ENCODE measurements at regions of chr2 and their contacts with region 1.

Region 1: DNA sequence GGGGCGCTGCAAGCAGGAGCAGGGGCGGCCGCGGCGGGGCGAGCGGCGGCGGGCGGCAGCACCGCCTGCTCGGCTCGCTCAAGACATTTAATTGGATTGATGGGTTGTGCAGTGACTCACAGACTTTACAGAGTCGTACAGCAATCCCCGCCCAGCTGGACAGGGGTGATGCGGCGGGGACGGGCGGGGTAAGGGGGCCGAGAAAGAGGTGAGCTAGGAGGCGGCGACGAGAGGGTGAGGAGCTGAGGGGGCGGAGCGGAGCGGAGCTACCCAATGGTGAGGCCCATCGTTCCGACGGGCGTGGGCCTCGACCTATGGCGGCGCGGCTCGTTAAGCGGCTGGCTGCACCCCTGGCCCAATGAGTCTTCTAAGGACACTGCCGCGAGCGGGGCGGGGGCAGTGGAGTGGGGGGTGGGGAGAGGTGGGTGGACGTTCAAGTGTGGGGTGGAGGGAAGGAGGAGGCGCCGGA is 97.1 kb upstream of the SERTAD2 start:
- DNase-seq: peak; percentile 94 to 100 (median 99)
- H3K4me3 ChIP-seq: peak overlapping the region; percentile 59 to 97 (median 86)
- H3K27ac ChIP-seq: peak overlapping the region; percentile 89 to 100 (median 99)
- H3K27me3 ChIP-seq: no peaks in the 10 kb centered on the region
- CTCF ChIP-seq: peak in 27 of 56 donors; percentile 1 to 54 (median 33)

Region 2: GRCh38 chr2:64653349-64654062 is 97.3 kb before region 1 on chr2 and contains the start of gene SERTAD2:
- intact Hi-C with region 1: loop called (anchors 1 to 2 kb)
- DNase-seq: peak; percentile 72 to 90 (median 83)
- H3K4me3 ChIP-seq: peak within 1 kb of the TSS; percentile 74 to 99 (median 93)
- H3K27ac ChIP-seq: peak within 1 kb of the TSS; percentile 83 to 99 (median 96)
- H3K27me3 ChIP-seq: no peaks in the 10 kb centered on the region
- CTCF ChIP-seq: peak in 25 of 56 donors; percentile 3 to 41 (median 16)
- total RNA-seq, gene SERTAD2: 7.8 to 24.8 (median 13.4) TPM

Region 3: GRCh38 chr2:64730551-64731262 is 20.1 kb before region 1 on chr2:
- intact Hi-C with region 1: loop called in 1 of 2 experiments (anchors 2 kb)
- DNase-seq: peak in 8 of 10 donors; percentile 47 to 79 (median 64)
- H3K4me3 ChIP-seq: peak overlapping the region; percentile 22 to 70 (median 50)
- H3K27ac ChIP-seq: peak overlapping the region; percentile 21 to 91 (median 82)
- H3K27me3 ChIP-seq: no peaks in the 10 kb centered on the region
- CTCF ChIP-seq: peak in 5 of 56 donors; percentile 6 to 33 (median 12)

Region 4: GRCh38 chr2:64807417-64807816 is 56.6 kb after region 1 on chr2:
- intact Hi-C with region 1: no loop called
- DNase-seq: peak in 1 of 10 donors; percentile 36
- H3K4me3 ChIP-seq: no peak overlapping the region
- H3K27ac ChIP-seq: no peak overlapping the region
- H3K27me3 ChIP-seq: no peaks in the 10 kb centered on the region
- CTCF ChIP-seq: no peak

Region 5: DNA sequence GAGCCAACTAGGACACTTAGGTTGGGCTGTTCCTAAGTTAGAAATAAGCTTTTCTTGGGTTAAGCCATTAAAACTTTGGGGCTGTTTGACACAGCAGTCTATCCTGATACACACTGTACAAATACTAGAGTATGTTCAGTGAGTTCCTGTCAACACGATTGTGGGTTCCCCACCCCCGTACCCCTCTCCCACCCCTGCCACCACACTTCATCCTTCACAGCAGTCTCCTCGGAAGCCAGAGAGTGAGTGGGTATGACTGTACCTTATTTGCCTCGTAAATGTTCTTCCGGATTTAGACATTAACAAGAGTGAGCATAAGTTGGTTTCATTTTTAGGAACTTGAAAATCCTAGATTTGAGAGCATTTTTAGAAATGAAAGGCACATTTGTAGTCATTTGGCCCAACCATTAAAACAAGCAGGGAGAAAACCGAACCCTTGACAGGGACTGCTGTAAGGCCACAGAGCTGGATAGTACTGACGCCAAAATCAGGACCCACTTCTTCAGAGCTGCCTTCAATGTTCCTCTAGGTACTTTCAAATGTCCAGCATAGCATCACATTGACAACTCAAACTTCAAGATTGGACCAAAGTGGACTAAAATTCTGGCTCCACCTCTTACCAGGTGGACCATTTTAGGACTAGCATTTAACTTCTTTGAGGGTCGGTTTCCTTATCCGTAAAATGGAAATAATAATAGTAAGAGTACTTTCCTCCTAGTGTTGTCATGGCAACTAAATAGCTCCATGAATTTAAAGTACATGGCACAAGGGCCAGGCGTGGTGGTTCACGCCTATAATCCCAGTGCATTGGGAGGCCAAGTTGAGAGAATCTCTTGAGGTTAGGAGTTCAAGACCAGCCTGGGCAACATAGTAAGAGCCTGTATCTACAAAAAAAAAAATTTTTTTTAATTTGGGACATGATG is 69.2 kb after region 1 on chr2:
- intact Hi-C with region 1: no loop called
- DNase-seq: peak in 1 of 10 donors; percentile 17
- H3K4me3 ChIP-seq: no peak overlapping the region
- H3K27ac ChIP-seq: peak overlapping the region in 16 of 59 donors; percentile 10 to 61 (median 27)
- H3K27me3 ChIP-seq: no peaks in the 10 kb centered on the region
- CTCF ChIP-seq: no peak

Region 6: GRCh38 chr2:64831134-64831976 is 80.5 kb after region 1 on chr2:
- intact Hi-C with region 1: loop called (anchors 1 to 2 kb)
- DNase-seq: peak; percentile 18 to 85 (median 68)
- H3K4me3 ChIP-seq: peak overlapping the region in 43 of 59 donors; percentile 1 to 64 (median 31)
- H3K27ac ChIP-seq: peak overlapping the region in 58 of 59 donors; percentile 10 to 94 (median 82)
- H3K27me3 ChIP-seq: no peaks in the 10 kb centered on the region
- CTCF ChIP-seq: peak; percentile 30 to 92 (median 82)

Region 7: GRCh38 chr2:64998658-64999061 is 247.8 kb after region 1 on chr2:
- intact Hi-C with region 1: no loop called
- DNase-seq: peak in 3 of 10 donors; percentile 30 to 49 (median 31)
- H3K4me3 ChIP-seq: peak overlapping the region in 17 of 59 donors; percentile 1 to 40 (median 14)
- H3K27ac ChIP-seq: peak overlapping the region in 46 of 59 donors; percentile 0 to 78 (median 50)
- H3K27me3 ChIP-seq: no peaks in the 10 kb centered on the region
- CTCF ChIP-seq: no peak